ENCODE measurements at regions of chr11 and their contacts with region 1.

Region 1: GRCh38 chr11:66022401-66023185 is 3.7 kb downstream of the CATSPER1 start:
- DNase-seq: peak; percentile 84
- ATAC-seq: peak; percentile 93
- H3K4me3 Mint-ChIP-seq: peak overlapping the region; percentile 2
- H3K27ac Mint-ChIP-seq: no peak overlapping the region
- H3K4me1 Mint-ChIP-seq: peaks cover 22% of the 10 kb centered on the region
- H3K27me3 Mint-ChIP-seq: no peaks in the 10 kb centered on the region

Region 2: DNA sequence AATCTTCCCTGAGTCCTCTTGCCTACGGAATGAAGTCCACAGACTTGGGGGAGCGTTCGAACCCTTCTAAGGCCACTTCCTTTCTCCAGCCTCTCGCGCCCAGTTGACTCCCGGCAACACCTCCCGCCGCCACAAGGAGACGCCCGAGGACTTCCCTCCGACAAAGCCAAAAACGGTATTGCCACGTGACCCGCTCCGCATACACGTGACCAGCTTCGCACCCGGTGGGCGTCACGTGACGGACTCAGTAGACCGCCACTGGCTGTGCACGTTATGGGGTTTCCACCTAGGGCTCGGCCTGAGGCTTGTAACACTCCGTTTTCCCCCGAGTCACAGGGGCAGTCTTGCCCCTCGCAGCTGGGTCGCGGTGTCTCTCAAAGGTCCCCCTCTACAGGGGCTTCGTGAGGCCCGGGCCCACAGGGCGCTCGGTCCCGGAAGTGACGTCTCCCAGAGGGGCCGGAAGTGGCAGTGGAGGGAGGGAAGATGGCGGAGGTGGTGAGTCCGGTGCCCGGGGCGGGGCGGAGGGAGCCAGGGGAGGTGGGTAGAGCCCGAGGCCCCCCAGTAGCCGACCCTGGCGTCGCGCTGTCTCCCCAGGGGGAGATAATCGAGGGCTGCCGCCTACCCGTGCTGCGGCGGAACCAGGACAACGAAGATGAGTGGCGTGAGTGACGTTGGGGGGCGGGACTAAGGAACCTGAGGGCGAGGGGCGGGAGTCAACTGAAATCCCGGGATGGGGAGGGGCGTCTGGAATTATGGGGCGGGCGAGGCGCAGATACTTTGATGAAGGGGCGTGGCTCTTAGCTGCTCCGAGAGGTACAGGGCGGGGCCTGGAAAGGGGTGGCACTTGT is 310.6 kb before region 1 on chr11 and contains the start of gene KAT5:
- CTCF ChIA-PET with region 1: interaction called, 11 read pairs
- POLR2A ChIA-PET with region 1: no interaction called
- DNase-seq: peak; percentile 99
- ATAC-seq: peak; percentile 86
- H3K4me3 Mint-ChIP-seq: peak within 1 kb of the TSS; percentile 85
- H3K27ac Mint-ChIP-seq: peak within 1 kb of the TSS; percentile 99
- H3K4me1 Mint-ChIP-seq: peaks cover 30% of the 10 kb centered on the region
- H3K27me3 Mint-ChIP-seq: no peaks in the 10 kb centered on the region
- total RNA-seq, gene KAT5: 63.2 to 68.7 TPM

Region 3: GRCh38 chr11:66008468-66009101 is 14.0 kb before region 1 on chr11:
- CTCF ChIA-PET with region 1: interaction called, 12 read pairs
- POLR2A ChIA-PET with region 1: interaction called, 3 read pairs
- DNase-seq: no peak
- ATAC-seq: no peak
- H3K4me3 Mint-ChIP-seq: no peak overlapping the region
- H3K27ac Mint-ChIP-seq: no peak overlapping the region
- H3K4me1 Mint-ChIP-seq: peaks cover 14% of the 10 kb centered on the region
- H3K27me3 Mint-ChIP-seq: peaks cover 27% of the 10 kb centered on the region

Region 4: DNA sequence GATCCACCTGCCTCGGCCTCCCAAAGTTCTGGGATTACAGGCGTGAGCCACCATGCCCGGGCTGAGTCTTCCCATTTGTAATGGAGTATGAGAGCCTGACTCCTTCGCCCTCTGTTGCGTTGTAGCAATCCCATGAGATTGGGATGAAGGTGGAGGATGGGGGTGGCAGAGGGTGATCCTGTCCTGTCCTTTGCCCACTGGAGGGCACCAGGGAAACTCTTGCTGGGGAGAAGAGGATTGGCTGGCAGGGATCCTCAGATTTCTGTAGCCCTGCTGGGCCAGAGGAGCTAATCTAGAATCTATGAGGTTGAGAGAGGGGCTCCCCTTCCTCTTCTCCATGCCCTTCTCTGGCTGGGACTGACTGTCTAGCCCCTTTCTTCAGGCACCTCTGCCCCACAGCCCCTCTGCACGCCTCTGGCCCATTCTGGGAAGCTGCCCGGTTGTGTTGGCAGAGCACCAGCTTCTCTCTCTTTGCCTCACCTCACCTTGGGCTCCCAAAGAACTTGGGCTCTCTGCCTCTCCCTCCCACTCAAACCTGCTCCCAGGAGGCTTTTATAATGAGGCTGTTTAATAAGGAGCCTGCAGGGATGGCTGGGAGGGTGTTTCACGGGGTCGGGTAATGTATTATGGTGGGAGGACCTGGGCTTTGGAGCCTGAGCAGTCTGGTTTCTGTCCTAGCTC is 13.2 kb after region 1 on chr11:
- CTCF ChIA-PET with region 1: interaction called, 23 read pairs
- POLR2A ChIA-PET with region 1: no interaction called
- DNase-seq: no peak
- ATAC-seq: no peak
- H3K4me3 Mint-ChIP-seq: no peak overlapping the region
- H3K27ac Mint-ChIP-seq: no peak overlapping the region
- H3K4me1 Mint-ChIP-seq: no peaks in the 10 kb centered on the region
- H3K27me3 Mint-ChIP-seq: peaks cover 6% of the 10 kb centered on the region

Region 5: DNA sequence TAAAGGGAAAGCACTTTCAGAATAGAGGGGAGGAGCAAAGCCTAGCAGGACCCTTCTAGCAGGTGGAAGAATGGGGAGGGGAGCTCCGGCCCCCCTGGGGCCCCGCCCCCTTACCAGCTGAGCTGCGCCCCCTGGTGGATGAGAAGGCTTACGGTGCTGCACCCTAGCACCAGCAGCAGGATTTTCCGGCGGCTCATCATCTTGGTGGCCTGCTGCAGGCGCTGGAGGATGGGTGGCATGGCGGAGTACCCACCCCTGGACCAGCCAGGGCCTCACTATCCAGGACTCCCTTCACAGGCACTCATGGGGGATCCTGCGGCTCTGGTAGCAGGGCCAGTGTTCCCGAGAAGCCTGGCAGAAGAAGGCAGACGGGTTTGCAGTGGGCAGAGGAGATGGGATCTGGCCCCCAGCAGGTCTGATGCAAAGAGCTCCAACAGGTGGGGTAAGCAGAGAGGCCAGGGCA is 22.6 kb after region 1 on chr11:
- CTCF ChIA-PET with region 1: interaction called, 42 read pairs
- POLR2A ChIA-PET with region 1: no interaction called
- DNase-seq: peak; percentile 86
- ATAC-seq: peak; percentile 95
- H3K4me3 Mint-ChIP-seq: no peak overlapping the region
- H3K27ac Mint-ChIP-seq: no peak overlapping the region
- H3K4me1 Mint-ChIP-seq: peaks cover 14% of the 10 kb centered on the region
- H3K27me3 Mint-ChIP-seq: peaks cover 11% of the 10 kb centered on the region

Region 6: DNA sequence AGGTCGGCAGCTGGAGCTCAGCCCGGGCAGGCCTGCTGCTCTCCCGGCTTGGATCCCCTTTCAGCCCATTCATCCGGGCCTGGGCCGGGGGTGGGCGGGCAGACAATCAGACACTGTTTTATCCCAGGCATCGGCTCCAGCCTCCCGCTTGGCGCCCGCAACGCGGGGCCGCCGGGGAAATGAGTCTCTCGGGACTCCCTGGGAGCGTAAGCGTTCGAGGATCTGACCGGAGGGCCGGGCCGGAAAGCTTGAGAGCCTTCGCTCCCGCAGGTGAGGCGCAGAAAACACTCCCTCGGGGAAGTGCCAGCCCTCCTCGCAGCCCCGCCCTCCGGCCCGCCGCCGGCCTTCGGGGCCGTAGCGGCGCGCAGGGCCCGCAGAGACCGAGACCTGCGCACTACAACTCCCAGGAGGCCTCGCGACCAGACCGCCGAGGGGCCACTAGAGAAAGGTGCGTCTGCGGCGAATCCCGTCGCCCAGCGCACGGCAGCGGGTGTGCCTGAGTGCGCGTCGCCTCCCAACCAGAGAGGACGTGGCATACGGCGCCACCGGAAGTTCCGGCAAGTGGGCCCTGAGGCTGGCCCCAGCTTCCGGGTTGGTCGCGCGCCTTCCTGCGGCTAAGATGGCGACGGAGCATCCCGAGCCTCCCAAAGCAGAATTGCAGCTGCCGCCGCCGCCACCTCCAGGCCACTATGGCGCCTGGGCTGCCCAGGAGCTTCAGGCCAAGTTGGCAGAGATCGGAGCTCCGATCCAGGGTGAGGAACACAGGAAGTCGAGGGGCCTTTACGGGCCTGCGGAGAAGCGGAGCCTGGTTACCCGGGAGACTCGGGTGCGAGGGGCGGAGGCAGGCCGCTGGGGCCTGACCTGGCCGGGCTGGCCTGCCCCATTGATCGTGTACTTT is 29.4 kb after region 1 on chr11 and contains the start of gene SF3B2:
- CTCF ChIA-PET with region 1: interaction called, 42 read pairs
- POLR2A ChIA-PET with region 1: interaction called, 3 read pairs
- DNase-seq: peak; percentile 98
- ATAC-seq: peak; percentile 98
- H3K4me3 Mint-ChIP-seq: peak within 1 kb of the TSS; percentile 100
- H3K27ac Mint-ChIP-seq: peak within 1 kb of the TSS; percentile 99
- H3K4me1 Mint-ChIP-seq: peaks cover 37% of the 10 kb centered on the region
- H3K27me3 Mint-ChIP-seq: peaks cover 11% of the 10 kb centered on the region
- total RNA-seq, gene SF3B2: 241 to 253 TPM

Measured in activated CD8-positive, alpha-beta T cell treated with anti-CD3 and anti-CD28 coated beads, Interleukin-2, amount 10 ng/mL, durations not matched to agents 7 days and 5 days (primary cell).